ENCODE measurements at regions of chr3 and their contacts with region 1.

Region 1: DNA sequence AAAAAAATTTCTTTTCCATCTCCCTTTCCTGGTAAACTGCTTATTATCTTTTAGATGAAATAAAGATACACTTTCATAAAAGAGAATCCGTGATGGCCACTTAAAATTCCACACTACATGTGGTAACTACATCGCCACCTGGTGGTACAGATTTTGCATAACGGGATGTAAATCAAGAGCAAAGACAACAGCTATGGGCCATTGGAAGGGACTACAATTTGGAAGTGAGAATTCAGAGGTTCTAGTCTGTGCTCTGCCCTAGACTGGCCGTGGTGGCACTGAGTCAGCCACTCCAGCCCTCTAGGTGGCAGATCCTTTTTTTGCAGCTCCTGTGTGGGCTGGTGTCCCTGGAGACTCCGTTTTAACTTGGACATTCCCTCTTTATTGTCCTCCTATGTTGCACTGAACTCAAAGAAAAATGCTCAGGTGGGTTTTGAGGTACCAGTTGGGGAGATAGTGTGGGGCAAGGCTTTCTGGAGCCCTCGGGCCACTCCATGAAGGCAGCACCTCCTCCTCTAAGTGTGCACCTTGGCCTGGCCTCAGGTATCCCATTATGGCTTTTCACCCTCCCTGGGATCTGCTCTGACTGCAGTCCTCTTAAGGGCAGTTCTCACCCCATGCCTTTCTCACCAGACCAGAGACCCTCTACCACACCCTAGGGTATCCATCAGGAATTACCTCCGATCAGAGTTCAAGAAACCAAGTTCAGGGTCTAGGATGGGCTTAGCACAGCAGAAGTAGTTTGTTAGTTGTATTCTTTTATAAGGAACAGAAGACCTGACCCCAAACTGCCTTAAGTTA is 54.9 kb downstream of the SPSB4 start:
- DNase-seq: peak; percentile 66 to 86
- H3K4me3 ChIP-seq: no peak overlapping the region
- H3K27ac ChIP-seq: no peak overlapping the region
- H3K4me1 ChIP-seq: peaks cover 0 to 20% (median 0%) of the 10 kb centered on the region in 4 donors
- H3K27me3 ChIP-seq: no peaks in the 10 kb centered on the region
- CTCF ChIP-seq: peak; percentile 72 to 82

Region 2: GRCh38 chr3:140898340-140899180 is 207.5 kb before region 1 on chr3:
- intact Hi-C with region 1: loop called (anchors 10 kb)
- DNase-seq: no peak
- H3K4me3 ChIP-seq: no peak overlapping the region
- H3K27ac ChIP-seq: no peak overlapping the region
- H3K4me1 ChIP-seq: no peaks in the 10 kb centered on the region
- H3K27me3 ChIP-seq: peaks cover 0 to 7% of the 10 kb centered on the region in 2 donors
- CTCF ChIP-seq: peak; percentile 40 to 66

Region 3: GRCh38 chr3:141006344-141006743 is 99.7 kb before region 1 on chr3:
- intact Hi-C with region 1: loop called (anchors 5 kb)
- DNase-seq: no peak
- H3K4me3 ChIP-seq: no peak overlapping the region
- H3K27ac ChIP-seq: no peak overlapping the region
- H3K4me1 ChIP-seq: peaks cover 0 to 1% (median 0%) of the 10 kb centered on the region in 4 donors
- H3K27me3 ChIP-seq: peaks cover 0 to 4% of the 10 kb centered on the region in 2 donors
- CTCF ChIP-seq: no peak

Measured in tibial artery (tissue), 4 donors.